A549 (cell line): ENCODE measurements at regions of chr3 and their contacts with region 1.

Region 1: DNA sequence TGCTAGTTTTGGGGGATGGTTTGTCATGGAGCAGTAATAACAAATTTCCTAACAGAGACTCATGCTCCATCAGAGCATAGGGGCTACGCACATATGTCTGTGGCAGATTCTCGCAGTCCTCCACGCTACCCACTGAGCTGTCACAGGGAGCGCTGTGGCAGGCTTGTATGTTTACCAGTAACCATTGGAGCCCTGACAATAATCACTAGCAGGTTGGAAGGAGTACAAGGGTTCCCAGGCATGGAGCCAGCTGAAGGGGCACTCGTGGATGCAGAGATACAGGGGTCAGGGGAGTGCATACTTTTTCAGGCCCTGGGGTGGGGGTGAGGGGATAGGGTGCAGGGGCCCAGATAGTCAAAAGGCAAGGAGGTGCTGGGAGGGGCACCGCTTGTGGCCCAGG is 7.9 kb upstream of the GP9 start:
- DNase-seq: no peak
- ATAC-seq: no peak
- H3K4me3 ChIP-seq: no peak overlapping the region
- H3K27ac ChIP-seq: no peak overlapping the region
- H3K4me1 ChIP-seq: 0 out of 3 replicates have a peak, but pooled peaks cover 3% of the 10 kb centered on the region
- CTCF ChIP-seq: no peak
- EP300 ChIP-seq: no peak
- POLR2A ChIP-seq: no peak
- RAD21 ChIP-seq: no peak

Region 2: DNA sequence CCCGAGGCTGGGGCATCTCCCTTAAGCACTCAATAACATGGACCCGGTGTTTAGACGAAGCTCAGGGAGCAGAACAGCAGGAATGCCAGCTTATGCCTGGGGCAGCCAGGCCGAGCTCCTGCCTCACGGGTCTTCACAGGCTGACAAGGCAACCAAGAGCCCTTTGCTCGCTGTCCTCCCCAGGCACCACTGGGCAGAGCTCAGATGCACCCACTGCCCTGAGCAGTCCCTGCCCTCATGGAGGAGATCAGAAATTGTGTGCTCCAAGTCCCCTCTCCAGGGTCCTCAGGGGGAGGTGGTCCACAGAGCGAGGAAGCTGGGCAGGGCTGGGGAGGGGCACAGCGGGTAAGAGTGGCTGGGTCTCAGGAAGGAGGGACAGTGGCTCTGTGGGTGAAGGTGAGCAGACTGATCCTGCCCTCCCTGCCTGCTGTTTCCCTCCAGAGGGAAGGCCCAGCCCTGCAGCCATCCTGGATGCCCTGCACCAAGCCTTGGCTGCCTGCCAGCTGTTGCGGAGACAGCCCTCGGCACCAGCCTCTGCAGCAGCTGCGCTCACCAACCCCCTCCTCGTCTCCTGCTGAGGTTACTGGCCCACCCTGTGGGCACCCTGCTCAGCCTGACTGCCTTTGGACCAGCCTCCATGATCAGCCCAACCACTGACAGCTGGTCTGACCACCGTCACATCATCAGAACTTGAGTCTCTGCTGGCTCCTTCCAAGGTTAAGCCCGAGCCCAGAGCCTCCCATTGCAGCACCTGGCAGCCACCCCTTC is 13.2 kb before region 1 on chr3:
- CTCF ChIA-PET with region 1: interaction called, 16 read pairs
- POLR2A ChIA-PET with region 1: no interaction called
- DNase-seq: no peak
- ATAC-seq: peak in 1 of 2 experiments; percentile 31; a peak in 2 of 6 replicates
- H3K4me3 ChIP-seq: no peak overlapping the region
- H3K27ac ChIP-seq: no peak overlapping the region
- H3K4me1 ChIP-seq: no peaks in the 10 kb centered on the region
- CTCF ChIP-seq: no peak
- EP300 ChIP-seq: no peak
- POLR2A ChIP-seq: no peak
- RAD21 ChIP-seq: no peak

Region 3: GRCh38 chr3:129068291-129068886 is 15.7 kb after region 1 on chr3:
- CTCF ChIA-PET with region 1: interaction called, 19 read pairs
- POLR2A ChIA-PET with region 1: no interaction called
- DNase-seq: no peak
- ATAC-seq: no peak
- H3K4me3 ChIP-seq: no peak overlapping the region
- H3K27ac ChIP-seq: no peak overlapping the region
- H3K4me1 ChIP-seq: no peaks in the 10 kb centered on the region
- CTCF ChIP-seq: no peak
- EP300 ChIP-seq: no peak
- POLR2A ChIP-seq: no peak
- RAD21 ChIP-seq: no peak

Region 4: DNA sequence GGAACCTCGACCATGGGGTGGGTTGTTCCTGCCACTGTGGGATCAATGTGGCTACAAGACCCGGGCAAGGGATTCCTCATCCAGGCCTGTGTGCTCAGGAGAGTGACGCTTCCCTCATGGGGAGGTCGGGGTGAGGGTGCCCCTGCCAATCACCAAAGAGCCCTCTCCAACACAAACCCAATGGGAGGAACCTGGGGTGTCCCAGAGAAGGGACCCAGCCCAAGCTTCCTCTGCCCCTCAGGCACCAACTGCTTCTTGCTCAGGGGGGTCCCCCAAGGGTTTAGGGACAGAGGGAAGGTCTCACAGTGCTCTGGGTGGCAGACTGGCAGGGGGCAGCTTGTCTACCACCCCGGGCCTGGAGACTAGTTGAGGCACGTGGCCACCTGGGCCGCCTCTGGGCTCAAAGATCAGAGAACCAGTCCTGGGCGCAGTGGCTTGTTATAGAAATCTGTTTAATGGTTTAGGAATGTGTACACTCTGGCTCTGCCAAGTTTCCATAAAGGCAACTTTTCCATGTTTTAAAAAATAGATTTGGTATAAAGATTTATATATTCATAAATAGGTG is 34.5 kb after region 1 on chr3:
- CTCF ChIA-PET with region 1: interaction called, 10 read pairs
- POLR2A ChIA-PET with region 1: no interaction called
- DNase-seq: no peak
- ATAC-seq: no peak
- H3K4me3 ChIP-seq: no peak overlapping the region
- H3K27ac ChIP-seq: no peak overlapping the region
- H3K4me1 ChIP-seq: no peaks in the 10 kb centered on the region
- CTCF ChIP-seq: no peak
- EP300 ChIP-seq: no peak
- POLR2A ChIP-seq: no peak
- RAD21 ChIP-seq: no peak